ENCODE measurements at regions of chr22 and their contacts with region 1.

Region 1: GRCh38 chr22:23709107-23709506 is 18.3 kb downstream of the RGL4 start:
- DNase-seq: no peak
- ATAC-seq: no peak
- H3K4me3 ChIP-seq: no peak overlapping the region
- H3K4me3 Mint-ChIP-seq: no peak overlapping the region
- H3K27ac ChIP-seq: no peak overlapping the region
- H3K27ac Mint-ChIP-seq: peak overlapping the region in 3 of 9 donors; percentile 23 to 76 (median 75)
- H3K4me1 ChIP-seq: peaks cover 5 to 11% of the 10 kb centered on the region in 2 donors
- H3K4me1 Mint-ChIP-seq: peaks cover 19 to 68% (median 51%) of the 10 kb centered on the region in 7 donors
- H3K27me3 ChIP-seq: no peaks in the 10 kb centered on the region
- H3K27me3 Mint-ChIP-seq: no peaks in the 10 kb centered on the region

Region 2: GRCh38 chr22:23376256-23376655 is 332.9 kb before region 1 on chr22:
- CTCF ChIA-PET with region 1: no interaction called
- POLR2A ChIA-PET with region 1: no interaction called
- intact Hi-C with region 1: no loop called
- DNase-seq: peak in 3 of 9 donors; percentile 7 to 42 (median 14)
- ATAC-seq: peak; percentile 41
- H3K4me3 ChIP-seq: no peak overlapping the region
- H3K4me3 Mint-ChIP-seq: no peak overlapping the region
- H3K27ac ChIP-seq: no peak overlapping the region
- H3K27ac Mint-ChIP-seq: peak overlapping the region in 1 of 9 donors; percentile 3
- H3K4me1 ChIP-seq: no peaks in the 10 kb centered on the region
- H3K4me1 Mint-ChIP-seq: no peaks in the 10 kb centered on the region
- H3K27me3 ChIP-seq: no peaks in the 10 kb centered on the region
- H3K27me3 Mint-ChIP-seq: peaks cover 0 to 6% (median 0%) of the 10 kb centered on the region in 5 donors

Region 3: DNA sequence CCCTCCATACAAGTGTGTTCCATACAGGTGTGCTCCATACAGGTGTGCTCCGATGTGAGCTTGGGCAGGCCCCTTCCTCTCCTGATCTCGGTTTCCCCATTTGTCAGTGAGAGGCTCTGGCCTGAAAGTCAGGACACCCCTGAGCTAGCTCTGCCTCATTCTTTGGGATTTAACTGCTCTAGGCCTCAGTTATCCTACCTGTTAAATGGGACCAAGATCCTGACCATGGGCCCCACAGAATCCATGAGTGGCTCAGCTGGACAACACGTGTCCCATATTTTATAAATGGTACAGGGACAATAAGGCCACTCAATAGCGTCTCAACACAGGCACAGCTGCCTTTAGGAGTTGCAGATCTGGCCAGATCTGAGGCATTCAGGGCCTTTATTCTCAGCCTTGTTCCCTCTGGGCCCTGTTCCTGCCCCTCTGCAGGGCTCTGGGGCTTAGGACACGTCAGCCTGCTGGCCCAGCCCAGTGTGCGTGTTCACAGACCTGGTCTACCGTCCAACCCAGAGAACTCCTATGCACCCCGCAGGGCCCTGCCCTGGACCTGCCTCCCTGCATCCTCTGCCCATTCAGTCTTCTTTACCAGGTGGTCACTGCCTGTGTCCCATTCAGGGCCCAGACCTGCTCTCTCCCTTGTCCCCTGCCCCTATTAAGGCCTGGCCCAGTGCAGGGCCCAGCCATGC is 110.2 kb before region 1 on chr22:
- CTCF ChIA-PET with region 1: no interaction called
- POLR2A ChIA-PET with region 1: no interaction called
- intact Hi-C with region 1: no loop called
- DNase-seq: no peak
- ATAC-seq: no peak
- H3K4me3 ChIP-seq: no peak overlapping the region
- H3K4me3 Mint-ChIP-seq: no peak overlapping the region
- H3K27ac ChIP-seq: no peak overlapping the region
- H3K27ac Mint-ChIP-seq: no peak overlapping the region
- H3K4me1 ChIP-seq: no peaks in the 10 kb centered on the region
- H3K4me1 Mint-ChIP-seq: peaks cover 0 to 4% (median 0%) of the 10 kb centered on the region in 7 donors
- H3K27me3 ChIP-seq: no peaks in the 10 kb centered on the region
- H3K27me3 Mint-ChIP-seq: peaks cover 0 to 1% (median 0%) of the 10 kb centered on the region in 5 donors

Region 4: DNA sequence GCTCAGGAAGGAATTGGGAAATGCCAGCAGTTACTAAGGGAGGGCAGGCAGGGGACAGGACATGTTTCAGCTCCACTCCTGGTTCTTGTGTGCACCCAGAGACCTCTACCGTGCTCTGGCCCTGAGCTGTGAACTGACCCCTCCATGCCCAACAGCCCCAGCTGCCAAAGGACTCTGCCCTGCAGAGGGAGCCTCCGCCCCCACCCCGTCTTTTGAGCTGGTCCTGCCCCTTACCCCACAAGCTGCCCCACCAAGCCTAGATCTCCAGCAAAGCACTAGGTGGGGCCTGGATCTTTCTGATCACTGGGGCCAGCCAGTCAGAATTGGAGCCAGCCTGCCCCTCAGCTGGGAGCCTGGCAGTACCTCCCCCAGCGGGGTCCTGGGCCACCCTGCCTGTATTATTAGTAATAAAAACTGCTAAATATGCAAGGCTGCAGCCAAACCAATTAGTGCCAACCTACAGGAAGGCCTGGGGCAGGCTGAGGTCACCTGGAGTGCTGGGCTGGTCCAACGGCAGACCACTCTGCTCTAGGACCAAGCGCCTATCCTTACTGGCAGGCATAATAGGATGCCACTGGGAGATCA is 53.1 kb before region 1 on chr22:
- CTCF ChIA-PET with region 1: no interaction called
- POLR2A ChIA-PET with region 1: no interaction called
- intact Hi-C with region 1: loop called in 1 of 2 experiments (anchors 10 kb)
- DNase-seq: no peak
- ATAC-seq: no peak
- H3K4me3 ChIP-seq: no peak overlapping the region
- H3K4me3 Mint-ChIP-seq: no peak overlapping the region
- H3K27ac ChIP-seq: no peak overlapping the region
- H3K27ac Mint-ChIP-seq: peak overlapping the region in 3 of 9 donors; percentile 36 to 81 (median 51)
- H3K4me1 ChIP-seq: no peaks in the 10 kb centered on the region
- H3K4me1 Mint-ChIP-seq: no peaks in the 10 kb centered on the region
- H3K27me3 ChIP-seq: no peaks in the 10 kb centered on the region
- H3K27me3 Mint-ChIP-seq: no peaks in the 10 kb centered on the region

Region 5: DNA sequence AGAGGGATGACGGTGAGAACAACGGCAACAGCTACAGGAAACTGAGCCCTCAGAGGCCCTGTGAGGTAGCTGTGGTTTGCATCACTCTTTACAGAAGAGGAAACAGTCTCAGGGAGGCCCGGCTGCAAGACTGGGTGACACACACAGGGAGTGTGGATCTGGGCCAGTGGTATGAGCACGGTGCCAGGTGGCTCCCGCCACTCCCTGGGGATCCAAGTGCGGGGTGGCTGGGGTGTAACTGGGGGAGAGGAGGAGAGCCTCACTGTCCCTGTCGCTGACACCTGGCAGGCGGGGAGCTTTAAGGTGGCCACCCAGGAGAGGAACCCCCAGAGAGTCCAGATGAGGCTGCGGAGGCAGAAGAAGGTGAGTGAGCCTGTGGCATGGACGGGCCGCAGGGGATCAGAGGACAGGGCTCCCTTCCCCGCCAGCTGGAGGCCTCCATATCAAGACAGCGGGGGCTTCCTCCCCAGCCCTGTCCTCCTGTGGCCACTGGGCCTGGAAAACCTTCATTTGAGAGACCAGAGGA is 12.7 kb before region 1 on chr22:
- CTCF ChIA-PET with region 1: no interaction called
- POLR2A ChIA-PET with region 1: interaction called, 8 read pairs
- intact Hi-C with region 1: loop called (anchors 1 kb)
- DNase-seq: peak; percentile 60 to 91 (median 86)
- ATAC-seq: peak; percentile 99
- H3K4me3 ChIP-seq: peak overlapping the region; percentile 71
- H3K4me3 Mint-ChIP-seq: peak overlapping the region; percentile 94 to 100 (median 98)
- H3K27ac ChIP-seq: peak overlapping the region; percentile 99
- H3K27ac Mint-ChIP-seq: peak overlapping the region; percentile 99 to 100 (median 100)
- H3K4me1 ChIP-seq: peaks cover 28 to 38% of the 10 kb centered on the region in 2 donors
- H3K4me1 Mint-ChIP-seq: peaks cover 37 to 64% (median 51%) of the 10 kb centered on the region in 7 donors
- H3K27me3 ChIP-seq: no peaks in the 10 kb centered on the region
- H3K27me3 Mint-ChIP-seq: no peaks in the 10 kb centered on the region

Region 6: DNA sequence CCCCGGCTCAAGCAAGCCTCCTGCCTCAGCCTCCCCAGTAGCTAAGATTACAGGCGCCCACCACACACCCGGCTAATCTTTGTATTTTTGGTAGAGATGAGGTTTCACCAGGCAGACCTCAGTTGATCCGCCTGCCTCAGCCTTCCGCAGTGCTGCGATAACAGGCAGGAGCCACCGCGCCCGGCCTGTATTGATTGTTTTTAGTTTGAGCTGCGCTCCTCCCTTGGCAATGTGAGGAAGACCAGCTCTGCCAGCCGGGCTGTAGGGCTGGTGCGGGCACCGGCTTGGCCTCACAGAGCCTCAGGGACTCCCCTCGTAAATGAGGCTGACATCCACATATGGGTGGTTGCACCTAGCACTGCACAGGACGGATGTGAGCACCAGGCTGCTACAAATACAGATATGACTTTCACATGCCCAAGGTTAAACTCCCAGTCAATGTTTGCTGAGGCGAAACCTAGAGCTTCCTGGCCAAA is 141.1 kb after region 1 on chr22:
- CTCF ChIA-PET with region 1: no interaction called
- POLR2A ChIA-PET with region 1: no interaction called
- intact Hi-C with region 1: no loop called
- DNase-seq: no peak
- ATAC-seq: no peak
- H3K4me3 ChIP-seq: no peak overlapping the region
- H3K4me3 Mint-ChIP-seq: peak overlapping the region in 5 of 10 donors; percentile 21 to 69 (median 29)
- H3K27ac ChIP-seq: no peak overlapping the region
- H3K27ac Mint-ChIP-seq: peak overlapping the region in 1 of 9 donors; percentile 23
- H3K4me1 ChIP-seq: no peaks in the 10 kb centered on the region
- H3K4me1 Mint-ChIP-seq: peaks cover 0 to 2% (median 0%) of the 10 kb centered on the region in 7 donors
- H3K27me3 ChIP-seq: no peaks in the 10 kb centered on the region
- H3K27me3 Mint-ChIP-seq: peaks cover 0 to 13% (median 0%) of the 10 kb centered on the region in 5 donors